Activated CD4-positive, alpha-beta memory T cell treated with anti-CD3 and anti-CD28 coated beads, Interleukin-2, amount 10 ng/mL, durations not matched to agents 7 days and 5 days (primary cell): ENCODE measurements at regions of chr14 and their contacts with region 1.

Region 1: GRCh38 chr14:75514673-75515628 is 7.3 kb upstream of the BATF start:
- DNase-seq: peak; percentile 70
- H3K4me3 Mint-ChIP-seq: peak overlapping the region; percentile 59
- H3K27ac Mint-ChIP-seq: peak overlapping the region; percentile 85
- H3K4me1 Mint-ChIP-seq: peaks cover 45% of the 10 kb centered on the region
- H3K27me3 Mint-ChIP-seq: no peaks in the 10 kb centered on the region

Region 2: GRCh38 chr14:75459099-75459741 is 55.7 kb before region 1 on chr14:
- CTCF ChIA-PET with region 1: no interaction called
- POLR2A ChIA-PET with region 1: no interaction called
- DNase-seq: peak; percentile 45
- H3K4me3 Mint-ChIP-seq: no peak overlapping the region
- H3K27ac Mint-ChIP-seq: peak overlapping the region; percentile 58
- H3K4me1 Mint-ChIP-seq: peaks cover 13% of the 10 kb centered on the region
- H3K27me3 Mint-ChIP-seq: no peaks in the 10 kb centered on the region

Region 3: GRCh38 chr14:75487155-75487671 is 27.7 kb before region 1 on chr14:
- CTCF ChIA-PET with region 1: interaction called, 30 read pairs
- POLR2A ChIA-PET with region 1: interaction called, 8 read pairs
- DNase-seq: peak; percentile 40
- H3K4me3 Mint-ChIP-seq: no peak overlapping the region
- H3K27ac Mint-ChIP-seq: peak overlapping the region; percentile 61
- H3K4me1 Mint-ChIP-seq: peaks cover 39% of the 10 kb centered on the region
- H3K27me3 Mint-ChIP-seq: no peaks in the 10 kb centered on the region

Region 4: GRCh38 chr14:75497191-75497590 is 17.8 kb before region 1 on chr14:
- CTCF ChIA-PET with region 1: interaction called, 8 read pairs
- POLR2A ChIA-PET with region 1: interaction called, 18 read pairs
- DNase-seq: peak; percentile 44
- H3K4me3 Mint-ChIP-seq: peak overlapping the region; percentile 31
- H3K27ac Mint-ChIP-seq: peak overlapping the region; percentile 76
- H3K4me1 Mint-ChIP-seq: peaks cover 55% of the 10 kb centered on the region
- H3K27me3 Mint-ChIP-seq: no peaks in the 10 kb centered on the region

Region 5: GRCh38 chr14:75531660-75532317 is 16.8 kb after region 1 on chr14:
- CTCF ChIA-PET with region 1: interaction called, 16 read pairs
- POLR2A ChIA-PET with region 1: interaction called, 14 read pairs
- DNase-seq: no peak
- H3K4me3 Mint-ChIP-seq: no peak overlapping the region
- H3K27ac Mint-ChIP-seq: peak overlapping the region; percentile 26
- H3K4me1 Mint-ChIP-seq: peaks cover 72% of the 10 kb centered on the region
- H3K27me3 Mint-ChIP-seq: no peaks in the 10 kb centered on the region

Region 6: GRCh38 chr14:75542588-75543091 is 27.7 kb after region 1 on chr14:
- CTCF ChIA-PET with region 1: interaction called, 11 read pairs
- POLR2A ChIA-PET with region 1: interaction called, 172 read pairs
- DNase-seq: peak; percentile 82
- H3K4me3 Mint-ChIP-seq: peak overlapping the region; percentile 57
- H3K27ac Mint-ChIP-seq: peak overlapping the region; percentile 99
- H3K4me1 Mint-ChIP-seq: peaks cover 77% of the 10 kb centered on the region
- H3K27me3 Mint-ChIP-seq: no peaks in the 10 kb centered on the region

Region 7: DNA sequence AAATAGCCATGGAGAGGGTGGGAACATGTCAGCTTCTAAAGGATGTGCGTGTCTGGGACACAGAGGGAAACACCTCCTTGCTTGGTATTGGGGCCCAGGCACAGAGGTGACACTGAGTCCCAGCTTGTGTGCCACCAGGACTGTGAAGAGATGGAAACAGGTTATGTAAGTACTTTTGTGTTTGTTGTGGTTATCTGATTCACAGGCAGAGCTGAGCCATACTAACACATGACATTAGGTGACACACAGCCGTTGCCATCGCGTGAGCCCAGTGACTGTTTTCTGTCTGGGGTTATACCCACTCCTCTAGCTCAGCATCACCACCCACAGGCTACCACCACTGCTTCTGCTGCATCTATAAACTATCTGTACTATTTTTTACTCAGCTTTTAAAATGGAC is 51.4 kb after region 1 on chr14:
- CTCF ChIA-PET with region 1: interaction called, 22 read pairs
- POLR2A ChIA-PET with region 1: interaction called, 6 read pairs
- DNase-seq: peak; percentile 84
- H3K4me3 Mint-ChIP-seq: peak overlapping the region; percentile 21
- H3K27ac Mint-ChIP-seq: peak overlapping the region; percentile 74
- H3K4me1 Mint-ChIP-seq: peaks cover 74% of the 10 kb centered on the region
- H3K27me3 Mint-ChIP-seq: no peaks in the 10 kb centered on the region